ENCODE measurements at regions of chr3 and their contacts with region 1.

Region 1: DNA sequence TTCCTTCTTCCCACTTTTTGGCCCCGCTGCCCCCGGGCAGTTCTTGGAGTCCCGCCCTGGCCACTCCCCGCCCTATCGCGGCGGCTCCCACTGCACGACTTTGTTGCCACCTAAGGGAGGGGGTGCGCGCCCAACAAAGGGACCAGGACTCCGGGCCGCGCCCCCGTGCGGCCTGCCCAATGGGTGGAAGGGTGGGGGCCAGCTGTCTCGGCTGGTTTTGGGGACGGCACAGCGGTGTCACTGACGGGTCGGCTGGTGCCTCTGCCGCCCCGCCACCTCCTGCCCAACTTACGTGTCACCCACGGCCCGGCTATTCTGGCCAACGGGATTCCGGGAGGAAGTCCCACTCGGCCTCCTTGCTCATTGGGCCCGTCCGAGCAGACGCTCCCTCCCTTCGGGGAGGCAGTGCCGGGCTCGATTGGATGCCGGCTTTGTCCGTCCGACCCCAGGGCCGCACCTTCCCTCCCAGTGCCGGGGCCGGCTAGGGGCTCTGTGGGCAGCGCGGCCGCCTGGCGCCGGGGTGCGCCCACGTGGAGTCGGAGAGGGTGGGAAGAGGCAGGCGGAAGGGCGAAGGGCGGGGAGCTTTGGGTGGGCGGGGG is at the start of gene GOLIM4:
- DNase-seq: peak; percentile 97
- ATAC-seq: peak; percentile 96
- H3K4me3 ChIP-seq: peak within 1 kb of the TSS; percentile 74
- H3K27ac ChIP-seq: peak within 1 kb of the TSS; percentile 90
- H3K4me1 ChIP-seq: peaks cover 7% of the 10 kb centered on the region
- H3K27me3 ChIP-seq: no peaks in the 10 kb centered on the region
- CTCF ChIP-seq: no peak
- POLR2A ChIP-seq: peak; percentile 56
- RAD21 ChIP-seq: no peak
- total RNA-seq, gene GOLIM4: 71.2 and 90.0 TPM in 2 replicates

Region 2: DNA sequence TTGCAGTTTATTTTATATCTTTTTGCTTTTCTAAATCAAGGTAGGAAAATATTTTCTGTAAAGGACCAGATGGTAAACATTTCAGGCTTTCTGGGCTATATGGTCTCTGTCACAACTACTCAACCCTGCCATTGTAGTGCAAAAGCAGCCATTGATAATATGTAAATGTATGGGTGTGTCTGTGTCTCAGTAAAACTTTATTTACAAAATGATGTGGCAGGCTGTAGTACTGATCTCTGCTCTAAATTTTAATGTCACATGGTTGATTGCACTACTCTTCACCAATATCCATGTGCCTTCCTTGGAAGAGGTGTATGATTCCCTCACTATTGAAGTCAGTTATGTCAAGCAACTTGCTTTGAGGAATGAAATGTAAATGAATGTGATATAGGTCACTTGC is 175.0 kb before region 1 on chr3:
- CTCF ChIA-PET with region 1: no interaction called
- POLR2A ChIA-PET with region 1: no interaction called
- dilution Hi-C with region 1: no loop called
- in situ Hi-C with region 1: no loop called
- intact Hi-C with region 1: loop called (anchors 5 kb)
- DNase-seq: no peak
- ATAC-seq: no peak
- H3K4me3 ChIP-seq: no peak overlapping the region
- H3K27ac ChIP-seq: no peak overlapping the region
- H3K4me1 ChIP-seq: no peaks in the 10 kb centered on the region
- H3K27me3 ChIP-seq: peaks cover 3% of the 10 kb centered on the region
- CTCF ChIP-seq: no peak
- POLR2A ChIP-seq: no peak
- RAD21 ChIP-seq: no peak

Region 3: GRCh38 chr3:168047190-168047795 is 48.4 kb before region 1 on chr3:
- CTCF ChIA-PET with region 1: interaction called, 8 read pairs
- POLR2A ChIA-PET with region 1: no interaction called
- dilution Hi-C with region 1: no loop called
- in situ Hi-C with region 1: no loop called
- intact Hi-C with region 1: loop called (anchors 1 kb)
- DNase-seq: peak; percentile 87
- ATAC-seq: peak; percentile 73
- H3K4me3 ChIP-seq: no peak overlapping the region
- H3K27ac ChIP-seq: no peak overlapping the region
- H3K4me1 ChIP-seq: peaks cover 13% of the 10 kb centered on the region
- H3K27me3 ChIP-seq: no peaks in the 10 kb centered on the region
- CTCF ChIP-seq: peak; percentile 99
- POLR2A ChIP-seq: peak; percentile 47; the same call in 1 of the 2 replicates
- RAD21 ChIP-seq: peak; percentile 94

Region 4: GRCh38 chr3:168071591-168072322 is 24.0 kb before region 1 on chr3:
- CTCF ChIA-PET with region 1: no interaction called
- POLR2A ChIA-PET with region 1: no interaction called
- dilution Hi-C with region 1: no loop called
- in situ Hi-C with region 1: no loop called
- intact Hi-C with region 1: loop called (anchors 2 kb)
- DNase-seq: peak; percentile 90
- ATAC-seq: peak; percentile 96
- H3K4me3 ChIP-seq: no peak overlapping the region
- H3K27ac ChIP-seq: peak overlapping the region; percentile 59
- H3K4me1 ChIP-seq: peaks cover 13% of the 10 kb centered on the region
- H3K27me3 ChIP-seq: no peaks in the 10 kb centered on the region
- CTCF ChIP-seq: no peak
- POLR2A ChIP-seq: no peak
- RAD21 ChIP-seq: no peak

Region 5: GRCh38 chr3:168165390-168166269 is 69.9 kb after region 1 on chr3:
- CTCF ChIA-PET with region 1: interaction called, 11 read pairs
- POLR2A ChIA-PET with region 1: no interaction called
- dilution Hi-C with region 1: no loop called
- in situ Hi-C with region 1: no loop called
- intact Hi-C with region 1: loop called (anchors 1 kb)
- DNase-seq: peak; percentile 76
- ATAC-seq: peak; percentile 96
- H3K4me3 ChIP-seq: no peak overlapping the region
- H3K27ac ChIP-seq: no peak overlapping the region
- H3K4me1 ChIP-seq: no peaks in the 10 kb centered on the region
- H3K27me3 ChIP-seq: no peaks in the 10 kb centered on the region
- CTCF ChIP-seq: peak; percentile 92
- POLR2A ChIP-seq: peak; percentile 39; the same call in 1 of the 2 replicates
- RAD21 ChIP-seq: peak; percentile 93

Region 6: GRCh38 chr3:168183774-168184173 is 88.1 kb after region 1 on chr3:
- CTCF ChIA-PET with region 1: no interaction called
- POLR2A ChIA-PET with region 1: no interaction called
- dilution Hi-C with region 1: no loop called
- in situ Hi-C with region 1: no loop called
- intact Hi-C with region 1: no loop called
- DNase-seq: no peak
- ATAC-seq: no peak
- H3K4me3 ChIP-seq: no peak overlapping the region
- H3K27ac ChIP-seq: no peak overlapping the region
- H3K4me1 ChIP-seq: no peaks in the 10 kb centered on the region
- H3K27me3 ChIP-seq: no peaks in the 10 kb centered on the region; the same call in 1 of the 2 replicates
- CTCF ChIP-seq: no peak
- POLR2A ChIP-seq: no peak
- RAD21 ChIP-seq: no peak

Region 7: DNA sequence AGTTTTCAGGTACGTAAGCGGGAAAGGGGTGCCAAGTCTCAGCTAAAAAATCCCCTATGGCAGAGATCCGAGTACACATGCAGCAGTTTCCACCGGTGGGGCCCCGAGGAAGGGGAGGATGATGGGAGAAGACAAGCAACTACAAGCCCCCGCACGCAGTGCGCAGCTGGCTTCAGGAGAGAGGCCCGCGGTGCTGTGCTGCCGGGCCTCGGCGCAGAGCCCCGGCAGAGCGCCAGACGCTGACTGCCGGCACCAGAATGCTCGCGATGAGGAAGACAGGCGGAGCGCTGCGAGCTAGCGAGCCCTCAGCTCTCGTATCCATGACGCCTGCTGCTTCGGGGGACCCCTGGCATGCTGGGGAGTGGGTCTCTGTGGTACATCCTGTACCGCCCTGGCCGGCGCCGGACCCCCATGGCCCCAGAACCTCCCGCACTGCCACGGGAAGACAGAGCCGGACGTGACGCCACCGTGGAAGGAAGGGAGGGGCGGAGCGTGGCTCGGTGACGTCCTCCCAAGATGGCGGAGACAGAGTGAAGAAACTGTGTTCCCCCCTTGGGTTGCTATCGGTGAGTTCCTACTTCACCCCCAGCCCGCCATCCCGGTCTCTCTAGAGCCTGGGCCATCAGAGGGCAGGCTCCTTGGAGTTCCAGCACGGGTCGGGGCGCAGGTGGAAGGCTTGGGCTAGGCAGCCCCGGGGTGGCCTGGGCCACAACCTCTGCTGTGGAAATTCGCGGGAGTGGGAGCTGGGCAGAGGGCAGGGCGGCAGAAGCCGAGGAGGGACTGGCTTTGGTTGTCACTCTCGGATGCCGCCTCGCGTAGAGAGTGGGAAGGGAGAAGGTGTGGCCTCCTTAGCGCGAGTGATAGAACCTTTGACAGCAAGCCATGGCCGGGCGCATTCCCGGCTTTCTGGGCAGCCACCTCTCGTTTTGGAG is 1677.5 kb after region 1 on chr3 and contains the start of gene MYNN:
- CTCF ChIA-PET with region 1: no interaction called
- POLR2A ChIA-PET with region 1: no interaction called
- dilution Hi-C with region 1: no loop called
- in situ Hi-C with region 1: loop called (anchors 25 kb)
- intact Hi-C with region 1: no loop called
- DNase-seq: peak; percentile 86
- ATAC-seq: peak; percentile 86
- H3K4me3 ChIP-seq: peak within 1 kb of the TSS; percentile 80
- H3K27ac ChIP-seq: peak within 1 kb of the TSS; percentile 94
- H3K4me1 ChIP-seq: no peaks in the 10 kb centered on the region
- H3K27me3 ChIP-seq: no peaks in the 10 kb centered on the region
- CTCF ChIP-seq: peak; percentile 18; the same call in 1 of the 2 replicates
- POLR2A ChIP-seq: peak; percentile 97
- RAD21 ChIP-seq: no peak; the same call in 1 of the 2 replicates
- total RNA-seq, gene MYNN: 26.9 and 33.1 TPM in 2 replicates